Aorta (tissue), 5 donors: ENCODE measurements at regions of chr6 and their contacts with region 1.

Region 1: DNA sequence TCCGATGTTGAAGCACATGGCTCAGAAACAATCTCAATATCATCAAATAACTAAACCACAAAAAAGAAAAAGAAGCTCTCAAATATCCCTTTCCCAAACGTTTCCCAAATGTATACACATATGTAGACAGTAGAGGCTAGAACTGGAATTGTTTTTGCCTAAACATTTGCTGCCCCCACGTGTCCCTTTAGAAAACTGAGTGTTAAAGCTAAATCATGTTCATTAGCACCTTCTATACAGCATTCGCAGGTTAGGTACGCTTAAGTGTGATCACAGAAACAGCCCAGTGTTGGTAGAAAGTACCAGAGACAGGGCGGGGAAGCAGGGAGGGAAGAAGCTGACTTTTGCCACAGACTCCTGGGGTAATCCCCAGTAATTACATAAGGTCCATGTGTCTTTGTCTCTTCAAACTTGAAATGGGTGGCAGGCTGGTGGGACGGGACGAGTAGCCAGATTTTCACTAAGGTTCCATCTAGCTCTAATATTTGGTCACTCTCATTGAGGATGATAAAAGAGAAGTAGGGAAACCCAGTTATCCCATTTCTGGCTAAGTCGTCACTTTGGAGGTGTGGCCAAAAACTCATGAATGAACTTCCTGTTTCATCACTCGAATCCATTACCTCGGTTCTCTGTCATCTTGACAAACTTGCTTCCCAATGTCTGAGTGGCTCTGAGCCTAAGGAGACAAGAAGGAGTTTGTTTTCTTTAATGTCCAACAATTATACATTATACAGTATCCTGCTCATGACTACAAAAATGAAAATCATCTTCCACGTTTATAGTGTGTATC is 15.0 kb upstream of the TFAP2A start:
- DNase-seq: no peak
- ATAC-seq: no peak
- H3K4me3 ChIP-seq: no peak overlapping the region
- H3K27ac ChIP-seq: no peak overlapping the region
- H3K4me1 ChIP-seq: no peaks in the 10 kb centered on the region
- H3K27me3 ChIP-seq: no peaks in the 10 kb centered on the region

Region 2: GRCh38 chr6:10019851-10020250 is 410.0 kb before region 1 on chr6:
- intact Hi-C with region 1: loop called in 1 of 2 experiments (anchors 10 kb)
- DNase-seq: no peak
- ATAC-seq: no peak
- H3K4me3 ChIP-seq: no peak overlapping the region
- H3K27ac ChIP-seq: no peak overlapping the region
- H3K4me1 ChIP-seq: no peaks in the 10 kb centered on the region
- H3K27me3 ChIP-seq: no peaks in the 10 kb centered on the region